RWPE1 (cell line): ENCODE measurements at regions of chr17 and their contacts with region 1.

Region 1: DNA sequence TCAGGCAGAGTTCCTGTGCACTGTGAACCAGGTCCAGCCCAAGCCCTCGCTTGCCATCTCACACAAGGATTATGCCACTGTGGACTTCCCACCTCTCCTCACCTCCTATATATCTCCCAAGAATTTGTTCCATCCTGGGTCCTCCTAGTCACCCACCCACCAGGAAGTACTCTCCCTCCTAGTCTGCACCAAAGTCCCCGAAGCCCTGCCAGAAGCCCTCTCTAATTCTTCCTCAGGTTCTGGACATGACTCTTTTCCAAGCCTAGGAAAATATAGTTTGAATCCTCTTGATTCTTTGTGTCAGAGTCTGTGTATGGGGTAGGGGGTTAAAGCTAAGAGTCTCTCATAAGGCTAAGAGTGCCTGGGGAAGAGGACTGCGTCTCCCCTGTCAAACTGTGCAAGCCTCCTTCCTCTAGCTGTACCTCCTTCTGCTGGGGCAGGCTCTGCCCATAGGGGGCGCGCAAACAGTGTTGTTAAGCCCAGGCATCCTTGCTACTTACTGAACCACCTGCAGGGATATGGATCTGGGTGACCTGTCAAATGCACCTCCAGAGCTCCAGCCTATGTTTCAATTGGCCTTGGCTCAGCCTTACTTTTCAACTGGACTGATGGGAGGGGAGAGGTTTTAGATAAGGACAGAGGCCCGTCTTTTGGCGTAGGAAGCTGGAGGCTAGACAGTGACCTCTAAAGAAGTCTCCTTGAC is 16.6 kb upstream of the DLX4 start:
- DNase-seq: peak; percentile 84
- H3K27ac ChIP-seq: no peak overlapping the region
- CTCF ChIP-seq: peak; percentile 97

Region 2: DNA sequence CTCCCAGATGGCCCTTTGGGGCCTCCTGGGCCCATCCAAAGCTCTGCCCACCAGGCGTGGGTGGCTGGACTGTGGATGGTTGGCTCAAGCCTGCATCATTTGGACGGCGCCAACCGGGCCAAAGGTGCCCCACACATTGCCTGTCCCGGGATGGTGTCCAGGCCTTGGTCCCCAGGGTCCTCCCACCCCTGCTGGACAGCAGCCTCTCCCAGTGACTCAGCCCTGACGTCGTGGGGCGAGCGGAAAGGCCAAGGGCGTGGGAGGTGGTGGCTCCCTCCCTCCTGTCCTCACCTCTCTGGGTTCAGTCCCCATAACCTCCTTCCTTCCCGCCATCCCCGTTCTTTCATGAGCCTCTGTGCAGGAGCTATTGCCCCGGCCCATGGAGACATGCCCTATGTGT is 25.5 kb before region 1 on chr17:
- CTCF ChIA-PET with region 1: interaction called, 10 read pairs
- POLR2A ChIA-PET with region 1: no interaction called
- DNase-seq: no peak
- H3K27ac ChIP-seq: no peak overlapping the region
- CTCF ChIP-seq: no peak

Region 3: DNA sequence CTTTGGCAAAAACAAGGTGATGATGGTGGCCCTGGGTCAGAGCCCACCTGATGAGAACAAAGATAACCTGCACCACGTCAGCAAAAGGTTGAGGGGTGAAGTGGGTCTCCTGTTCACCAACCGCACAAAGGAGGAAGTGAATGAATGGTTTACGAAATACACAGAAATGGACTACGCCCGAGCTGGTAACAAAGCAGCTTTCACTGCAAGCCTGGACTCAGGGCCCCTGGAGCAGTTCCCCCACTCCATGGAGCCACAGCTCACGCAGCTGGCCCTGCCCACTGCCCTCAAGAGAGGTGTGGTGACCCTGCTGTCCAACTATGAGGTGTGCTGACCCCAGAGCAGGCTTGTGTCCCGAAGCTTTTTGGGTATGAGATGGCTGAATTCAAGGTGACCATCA is 13.0 kb before region 1 on chr17:
- CTCF ChIA-PET with region 1: interaction called, 16 read pairs
- POLR2A ChIA-PET with region 1: no interaction called
- DNase-seq: no peak
- H3K27ac ChIP-seq: no peak overlapping the region
- CTCF ChIP-seq: no peak

Region 4: DNA sequence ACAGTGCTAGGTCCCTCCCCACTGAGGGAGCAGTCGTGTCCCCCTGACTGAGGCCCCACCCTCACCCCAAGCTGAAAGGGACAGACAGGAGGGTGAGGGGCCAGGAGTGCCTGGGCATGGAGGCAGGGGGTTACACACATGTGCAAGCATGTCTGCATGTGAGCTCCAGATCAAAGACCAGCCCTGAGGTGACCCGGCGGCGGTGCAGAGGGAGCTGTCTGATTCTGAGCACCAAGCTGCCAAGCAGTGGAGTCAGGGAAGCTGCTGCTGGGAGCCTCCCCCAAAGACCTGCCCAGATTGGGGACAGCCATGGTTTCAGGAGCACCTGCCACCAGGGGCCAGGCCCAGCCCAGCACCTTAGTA is 37.1 kb after region 1 on chr17:
- CTCF ChIA-PET with region 1: interaction called, 14 read pairs
- POLR2A ChIA-PET with region 1: interaction called, 4 read pairs
- DNase-seq: no peak
- H3K27ac ChIP-seq: peak overlapping the region; percentile 90
- CTCF ChIP-seq: no peak